CD4-positive, alpha-beta memory T cell (primary cell): ENCODE measurements at regions of chr12 and their contacts with region 1.

Region 1: GRCh38 chr12:11486623-11487444 is 91.5 kb upstream of the PRB2 start:
- DNase-seq: peak; percentile 79 to 82 (median 80)
- H3K4me3 ChIP-seq: no peak overlapping the region
- H3K4me3 Mint-ChIP-seq: peak overlapping the region in 1 of 8 donors; percentile 24
- H3K27ac ChIP-seq: no peak overlapping the region
- H3K27ac Mint-ChIP-seq: no peak overlapping the region
- H3K4me1 ChIP-seq: no peaks in the 10 kb centered on the region
- H3K4me1 Mint-ChIP-seq: peaks cover 4 to 6% (median 5%) of the 10 kb centered on the region in 4 donors
- H3K27me3 ChIP-seq: no peaks in the 10 kb centered on the region
- H3K27me3 Mint-ChIP-seq: peaks cover 7 to 11% of the 10 kb centered on the region in 2 donors

Region 2: DNA sequence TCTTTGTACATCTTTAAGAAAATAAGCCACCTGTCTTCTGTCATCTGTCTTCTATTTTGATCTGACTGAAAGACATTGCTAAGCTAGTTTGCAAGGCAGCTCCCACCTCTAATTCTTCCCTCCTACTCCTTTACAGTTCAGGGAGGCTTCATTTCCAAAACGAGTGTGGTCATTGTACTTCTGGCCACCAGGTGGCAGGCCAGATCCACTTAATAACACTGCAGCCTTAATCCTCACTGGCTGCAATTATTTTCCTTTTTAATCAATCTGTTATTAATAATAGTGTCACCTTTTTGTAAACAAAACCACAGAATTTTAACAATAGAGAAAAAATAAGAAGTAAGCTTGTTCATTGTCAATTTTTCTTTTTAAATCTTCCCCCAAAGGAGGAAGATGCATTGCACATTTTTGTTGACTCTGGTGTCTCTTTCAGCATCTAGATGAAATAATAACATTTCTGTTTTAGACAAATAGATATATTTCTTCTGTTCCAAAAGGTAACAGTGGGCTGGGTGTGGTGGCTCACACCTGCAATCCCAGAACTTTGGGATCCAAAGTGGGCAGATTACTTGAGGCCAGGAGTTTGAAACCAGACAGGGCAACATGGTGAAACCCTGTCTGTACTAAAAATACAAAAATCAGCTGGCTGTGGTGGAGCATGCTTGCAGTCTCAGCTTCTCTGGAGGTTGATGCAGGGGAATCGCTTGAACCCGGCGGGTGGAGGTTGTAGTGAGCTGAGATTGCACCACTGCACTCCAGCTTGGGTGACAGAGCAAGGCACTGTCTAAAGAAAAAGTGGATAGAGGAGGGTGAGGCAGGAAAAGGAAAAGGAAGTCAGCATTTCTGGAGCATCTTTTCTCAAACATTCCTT is 1250.8 kb before region 1 on chr12:
- CTCF ChIA-PET with region 1: interaction called, 8 read pairs
- POLR2A ChIA-PET with region 1: no interaction called
- intact Hi-C with region 1: loop called (anchors 1 kb)
- DNase-seq: peak in 4 of 5 donors; percentile 30 to 43 (median 38)
- H3K4me3 ChIP-seq: no peak overlapping the region
- H3K4me3 Mint-ChIP-seq: no peak overlapping the region
- H3K27ac ChIP-seq: no peak overlapping the region
- H3K27ac Mint-ChIP-seq: no peak overlapping the region
- H3K4me1 ChIP-seq: no peaks in the 10 kb centered on the region
- H3K4me1 Mint-ChIP-seq: peaks cover 0 to 2% (median 0%) of the 10 kb centered on the region in 4 donors
- H3K27me3 ChIP-seq: no peaks in the 10 kb centered on the region
- H3K27me3 Mint-ChIP-seq: peaks cover 0 to 1% of the 10 kb centered on the region in 2 donors

Region 3: DNA sequence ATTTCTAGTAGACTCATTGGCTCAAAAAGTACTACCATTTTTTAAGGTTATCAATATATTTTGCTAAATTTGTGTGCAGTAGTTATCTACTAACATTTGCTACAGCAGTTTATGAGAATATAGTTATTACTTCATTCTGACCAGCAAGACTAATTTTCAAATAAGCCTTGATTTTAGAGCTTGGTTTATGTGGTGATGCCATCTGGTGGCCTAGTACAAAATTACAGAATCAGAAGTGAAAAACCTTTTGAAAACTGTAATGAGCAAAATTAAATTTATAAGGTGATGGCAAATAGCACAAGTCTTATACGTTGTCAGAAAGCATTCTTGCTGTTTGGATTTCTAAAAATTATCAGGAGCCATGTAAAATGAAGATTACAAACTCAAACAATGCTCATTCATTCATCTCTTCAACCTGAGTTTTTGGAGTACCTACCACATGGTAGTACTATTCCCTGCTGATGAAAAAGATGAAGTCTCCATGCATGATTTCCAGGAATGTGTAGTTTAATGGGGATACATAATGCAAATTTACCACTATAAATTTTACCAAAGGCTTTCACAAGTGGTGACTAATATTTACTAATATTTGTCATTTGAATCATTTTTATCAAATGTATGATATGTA is 924.4 kb before region 1 on chr12:
- CTCF ChIA-PET with region 1: no interaction called
- POLR2A ChIA-PET with region 1: no interaction called
- intact Hi-C with region 1: loop called (anchors 5 kb)
- DNase-seq: peak in 4 of 5 donors; percentile 31 to 45 (median 38)
- H3K4me3 ChIP-seq: no peak overlapping the region
- H3K4me3 Mint-ChIP-seq: no peak overlapping the region
- H3K27ac ChIP-seq: no peak overlapping the region
- H3K27ac Mint-ChIP-seq: no peak overlapping the region
- H3K4me1 ChIP-seq: no peaks in the 10 kb centered on the region
- H3K4me1 Mint-ChIP-seq: no peaks in the 10 kb centered on the region
- H3K27me3 ChIP-seq: no peaks in the 10 kb centered on the region
- H3K27me3 Mint-ChIP-seq: peaks cover 11 to 24% of the 10 kb centered on the region in 2 donors

Region 4: DNA sequence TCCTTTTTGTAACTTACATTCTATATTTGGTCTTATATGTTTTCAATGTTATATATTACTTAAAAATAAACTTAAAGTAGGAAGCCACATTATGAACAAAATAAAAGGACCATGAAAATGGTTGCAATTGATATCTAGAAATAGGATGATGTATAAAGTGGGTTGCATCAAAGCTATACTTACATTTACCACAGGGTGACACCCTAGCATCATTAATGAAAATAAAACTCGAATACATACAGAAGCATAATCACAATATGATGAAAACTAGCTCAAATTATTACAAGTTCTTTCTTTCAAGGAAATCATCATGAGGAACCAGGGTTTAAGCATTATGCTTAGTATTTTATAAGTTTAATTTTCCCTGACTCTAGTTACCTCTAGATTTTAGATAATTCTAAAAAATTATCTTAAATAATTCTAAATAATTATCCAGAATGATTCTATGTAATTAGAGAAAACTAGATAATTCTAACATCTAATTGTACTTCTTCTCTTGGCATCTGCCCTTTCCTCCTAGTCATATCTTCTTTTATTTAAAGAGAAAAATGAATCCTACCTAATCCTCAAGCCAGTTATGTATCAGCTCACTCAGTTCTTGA is 715.6 kb before region 1 on chr12:
- CTCF ChIA-PET with region 1: interaction called, 113 read pairs
- POLR2A ChIA-PET with region 1: no interaction called
- intact Hi-C with region 1: no loop called
- DNase-seq: peak in 4 of 5 donors; percentile 45 to 57 (median 50)
- H3K4me3 ChIP-seq: no peak overlapping the region
- H3K4me3 Mint-ChIP-seq: no peak overlapping the region
- H3K27ac ChIP-seq: no peak overlapping the region
- H3K27ac Mint-ChIP-seq: no peak overlapping the region
- H3K4me1 ChIP-seq: no peaks in the 10 kb centered on the region
- H3K4me1 Mint-ChIP-seq: no peaks in the 10 kb centered on the region
- H3K27me3 ChIP-seq: peaks cover 3% of the 10 kb centered on the region
- H3K27me3 Mint-ChIP-seq: peaks cover 24 to 27% of the 10 kb centered on the region in 2 donors

Region 5: GRCh38 chr12:11171145-11171968 is 315.5 kb before region 1 on chr12 and contains the start of gene SMIM10L1:
- CTCF ChIA-PET with region 1: interaction called, 5 read pairs
- POLR2A ChIA-PET with region 1: no interaction called
- intact Hi-C with region 1: loop called (anchors 1 kb)
- DNase-seq: peak; percentile 84 to 88 (median 87)
- H3K4me3 ChIP-seq: peak within 1 kb of the TSS; percentile 70 to 95
- H3K4me3 Mint-ChIP-seq: peak within 1 kb of the TSS; percentile 98 to 100 (median 99)
- H3K27ac ChIP-seq: peak within 1 kb of the TSS; percentile 54
- H3K27ac Mint-ChIP-seq: peak within 1 kb of the TSS; percentile 97 to 99 (median 99)
- H3K4me1 ChIP-seq: peaks cover 51% of the 10 kb centered on the region
- H3K4me1 Mint-ChIP-seq: peaks cover 44 to 81% (median 55%) of the 10 kb centered on the region in 4 donors
- H3K27me3 ChIP-seq: no peaks in the 10 kb centered on the region
- H3K27me3 Mint-ChIP-seq: no peaks in the 10 kb centered on the region
- total RNA-seq, gene SMIM10L1: 11.6 to 11.9 TPM

Region 6: DNA sequence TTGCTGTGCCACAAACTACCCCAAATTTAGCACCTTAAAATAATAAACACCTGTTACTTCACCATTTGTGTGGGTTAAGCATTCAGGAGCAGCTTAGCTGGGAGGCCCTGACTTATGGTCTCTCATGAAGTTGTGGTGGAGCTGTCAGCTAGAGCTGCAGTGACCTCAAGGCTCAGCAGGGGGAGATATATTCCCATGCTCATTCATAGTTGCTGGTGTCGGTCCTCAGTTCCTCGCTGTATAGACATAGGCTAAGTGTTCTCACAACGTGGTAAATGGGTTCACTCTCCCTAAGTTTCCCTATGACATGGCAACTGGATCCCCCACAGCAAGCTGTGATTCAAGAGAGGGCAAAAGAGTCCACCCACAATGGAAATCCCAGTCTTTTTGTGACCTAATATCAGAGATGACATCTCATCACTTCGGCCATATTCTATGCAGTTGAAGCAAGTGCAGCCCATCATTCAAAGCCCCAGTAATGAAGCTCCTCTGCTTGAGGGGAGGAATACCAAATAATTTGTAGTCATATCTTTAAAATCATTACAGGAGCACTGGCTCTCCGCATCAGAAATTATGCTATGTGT is 258.4 kb before region 1 on chr12:
- CTCF ChIA-PET with region 1: interaction called, 33 read pairs
- POLR2A ChIA-PET with region 1: no interaction called
- intact Hi-C with region 1: loop called (anchors 1 kb)
- DNase-seq: peak; percentile 7 to 37 (median 17)
- H3K4me3 ChIP-seq: no peak overlapping the region
- H3K4me3 Mint-ChIP-seq: no peak overlapping the region
- H3K27ac ChIP-seq: no peak overlapping the region
- H3K27ac Mint-ChIP-seq: no peak overlapping the region
- H3K4me1 ChIP-seq: no peaks in the 10 kb centered on the region
- H3K4me1 Mint-ChIP-seq: no peaks in the 10 kb centered on the region
- H3K27me3 ChIP-seq: no peaks in the 10 kb centered on the region
- H3K27me3 Mint-ChIP-seq: no peaks in the 10 kb centered on the region

Region 7: GRCh38 chr12:11427341-11427740 is 59.5 kb before region 1 on chr12:
- CTCF ChIA-PET with region 1: no interaction called
- POLR2A ChIA-PET with region 1: no interaction called
- intact Hi-C with region 1: no loop called
- DNase-seq: no peak
- H3K4me3 ChIP-seq: no peak overlapping the region
- H3K4me3 Mint-ChIP-seq: no peak overlapping the region
- H3K27ac ChIP-seq: no peak overlapping the region
- H3K27ac Mint-ChIP-seq: no peak overlapping the region
- H3K4me1 ChIP-seq: no peaks in the 10 kb centered on the region
- H3K4me1 Mint-ChIP-seq: no peaks in the 10 kb centered on the region
- H3K27me3 ChIP-seq: no peaks in the 10 kb centered on the region
- H3K27me3 Mint-ChIP-seq: peaks cover 2 to 8% of the 10 kb centered on the region in 2 donors

Region 8: DNA sequence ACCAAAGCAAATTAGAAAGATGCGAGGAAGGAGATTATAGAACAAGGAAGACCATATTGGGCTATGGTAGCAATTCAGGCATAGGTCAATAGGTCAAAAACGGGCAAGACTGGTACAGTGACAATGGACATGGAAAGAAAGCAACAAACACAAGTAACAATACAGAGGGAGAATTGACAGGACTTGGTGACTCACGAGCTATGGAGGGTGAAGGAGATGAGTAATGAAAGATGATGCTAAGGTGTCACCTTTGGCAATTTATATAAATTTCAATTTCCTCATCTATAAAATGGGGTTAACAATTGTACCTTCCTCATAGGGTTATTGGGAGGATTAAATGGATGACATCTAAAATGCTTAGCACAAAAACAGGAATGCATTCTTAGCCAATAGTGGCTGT is 1091.0 kb after region 1 on chr12:
- CTCF ChIA-PET with region 1: no interaction called
- POLR2A ChIA-PET with region 1: no interaction called
- intact Hi-C with region 1: no loop called
- DNase-seq: no peak
- H3K4me3 ChIP-seq: no peak overlapping the region
- H3K4me3 Mint-ChIP-seq: no peak overlapping the region
- H3K27ac ChIP-seq: no peak overlapping the region
- H3K27ac Mint-ChIP-seq: no peak overlapping the region
- H3K4me1 ChIP-seq: peaks cover 9% of the 10 kb centered on the region
- H3K4me1 Mint-ChIP-seq: peaks cover 9 to 13% (median 12%) of the 10 kb centered on the region in 4 donors
- H3K27me3 ChIP-seq: no peaks in the 10 kb centered on the region
- H3K27me3 Mint-ChIP-seq: no peaks in the 10 kb centered on the region